Heart right ventricle (tissue), 16 donors: ENCODE measurements at regions of chr1 and their contacts with region 1.

Region 1: DNA sequence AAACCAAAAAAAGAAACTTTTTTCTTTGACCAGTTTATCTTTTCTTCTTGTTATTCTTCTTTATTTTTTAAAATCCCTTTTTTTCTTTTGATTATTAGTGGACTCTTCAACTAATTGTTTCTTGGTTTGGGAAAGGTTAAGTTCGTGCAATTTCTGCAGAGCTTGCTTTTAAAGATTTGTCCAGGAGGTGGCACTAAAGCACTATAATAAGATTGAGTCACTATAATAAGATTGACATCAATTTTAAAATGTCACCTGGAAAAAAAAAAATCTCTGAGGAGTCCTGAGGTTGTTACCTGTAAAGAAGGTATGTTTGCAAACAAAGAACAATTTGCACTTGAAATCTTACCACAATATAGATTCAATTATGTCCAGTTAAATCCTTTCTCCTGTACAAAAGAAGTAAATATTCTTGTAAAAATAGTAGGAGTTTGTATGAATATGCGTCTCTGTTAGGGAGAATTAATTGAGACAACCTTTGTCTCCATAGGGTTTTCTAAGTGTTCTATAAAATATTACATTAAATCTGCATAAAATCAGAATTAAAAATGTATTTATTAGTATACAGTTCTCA is 166.7 kb downstream of the ADGRL4 start:
- DNase-seq: peak in 1 of 2 donors; percentile 25
- ATAC-seq: peak in 1 of 8 donors; percentile 38
- H3K4me3 ChIP-seq: no peak overlapping the region
- H3K27ac ChIP-seq: no peak overlapping the region
- H3K4me1 ChIP-seq: peaks cover 0 to 17% (median 11%) of the 10 kb centered on the region in 9 donors
- H3K27me3 ChIP-seq: no peaks in the 10 kb centered on the region
- CTCF ChIP-seq: peak; percentile 32 to 85 (median 73)

Region 2: DNA sequence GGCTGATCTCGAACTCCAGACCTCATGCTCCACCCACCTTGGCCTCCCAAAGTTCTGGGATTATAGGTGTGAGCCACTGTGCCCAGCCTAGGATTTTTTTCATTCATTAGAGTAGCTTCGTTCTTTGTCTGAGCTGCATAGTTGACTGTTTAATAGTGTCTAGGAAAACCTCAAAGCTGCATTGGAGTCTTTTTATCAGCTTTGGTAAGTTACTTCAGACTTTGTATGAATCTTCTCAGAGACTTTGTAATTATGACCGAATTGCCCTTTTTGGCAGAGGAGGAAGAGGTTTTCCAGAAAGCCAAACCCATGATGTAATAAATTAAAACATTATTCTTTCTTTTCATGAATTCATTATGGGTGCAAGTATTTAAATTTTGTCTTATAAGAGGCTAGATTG is 830.0 kb before region 1 on chr1:
- intact Hi-C with region 1: no loop called
- DNase-seq: no peak
- ATAC-seq: no peak
- H3K4me3 ChIP-seq: peak overlapping the region in 6 of 10 donors; percentile 4 to 74 (median 61)
- H3K27ac ChIP-seq: peak overlapping the region in 6 of 10 donors; percentile 8 to 54 (median 22)
- H3K4me1 ChIP-seq: peaks cover 0 to 60% (median 44%) of the 10 kb centered on the region in 9 donors
- H3K27me3 ChIP-seq: no peaks in the 10 kb centered on the region
- CTCF ChIP-seq: no peak

Region 3: DNA sequence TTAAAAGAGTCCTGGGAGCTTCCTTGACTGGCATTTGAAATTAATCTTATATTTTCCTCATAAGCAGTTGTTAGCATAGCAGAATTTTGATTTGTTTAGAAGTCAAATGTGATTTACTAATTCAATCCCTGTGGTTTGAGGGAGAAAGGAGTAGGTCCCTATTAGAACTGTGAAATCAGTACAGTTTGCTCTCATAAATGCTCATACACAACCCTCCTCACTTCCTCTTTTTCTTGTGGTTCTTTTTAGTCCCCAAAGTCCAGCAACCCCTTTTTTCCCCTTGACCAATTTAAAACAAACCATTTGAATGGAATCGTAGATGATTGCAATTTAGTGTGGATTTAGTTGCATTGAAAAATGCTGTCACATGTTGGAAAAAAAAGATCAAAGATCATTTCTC is 199.3 kb before region 1 on chr1:
- intact Hi-C with region 1: no loop called
- DNase-seq: no peak
- ATAC-seq: no peak
- H3K4me3 ChIP-seq: no peak overlapping the region
- H3K27ac ChIP-seq: no peak overlapping the region
- H3K4me1 ChIP-seq: peaks cover 0 to 14% (median 3%) of the 10 kb centered on the region in 9 donors
- H3K27me3 ChIP-seq: no peaks in the 10 kb centered on the region
- CTCF ChIP-seq: no peak

Region 4: GRCh38 chr1:79193211-79194079 is 353.7 kb after region 1 on chr1:
- intact Hi-C with region 1: loop called in 8 of 10 experiments (anchors 1 to 5 kb)
- DNase-seq: peak in 1 of 2 donors; percentile 13
- ATAC-seq: peak; percentile 51 to 92 (median 77)
- H3K4me3 ChIP-seq: peak overlapping the region in 2 of 10 donors; percentile 1 to 2
- H3K27ac ChIP-seq: peak overlapping the region in 6 of 10 donors; percentile 29 to 70 (median 51)
- H3K4me1 ChIP-seq: peaks cover 0 to 17% (median 0%) of the 10 kb centered on the region in 9 donors
- H3K27me3 ChIP-seq: no peaks in the 10 kb centered on the region
- CTCF ChIP-seq: no peak